Endothelial cell of umbilical vein (primary cell): ENCODE measurements at regions of chr5 and their contacts with region 1.

Region 1: GRCh38 chr5:62305715-62306322 is at the start of gene KIF2A:
- DNase-seq: peak; percentile 93
- H3K4me3 ChIP-seq: peak within 1 kb of the TSS; percentile 96 to 100 (median 98)
- H3K27ac ChIP-seq: peak within 1 kb of the TSS; percentile 67
- H3K4me1 ChIP-seq: peaks cover 19% of the 10 kb centered on the region
- H3K27me3 ChIP-seq: no peaks in the 10 kb centered on the region
- CTCF ChIP-seq: peak in 1 of 2 donors; percentile 11
- POLR2A ChIP-seq: peak; percentile 27
- total RNA-seq, gene KIF2A: 57.7 and 65.1 TPM in 2 replicates

Region 2: GRCh38 chr5:62256161-62257019 is 49.4 kb before region 1 on chr5:
- CTCF ChIA-PET with region 1: interaction called, 3 read pairs
- POLR2A ChIA-PET with region 1: no interaction called
- dilution Hi-C with region 1: no loop called
- intact Hi-C with region 1: loop called (anchors 5 kb)
- DNase-seq: peak; percentile 57
- H3K4me3 ChIP-seq: no peak overlapping the region
- H3K27ac ChIP-seq: peak overlapping the region; percentile 36
- H3K4me1 ChIP-seq: peaks cover 9% of the 10 kb centered on the region
- H3K27me3 ChIP-seq: peaks cover 2 to 3% of the 10 kb centered on the region in 2 experiments
- CTCF ChIP-seq: no peak
- POLR2A ChIP-seq: no peak

Region 3: GRCh38 chr5:62340392-62340791 is 34.6 kb after region 1 on chr5:
- CTCF ChIA-PET with region 1: no interaction called
- POLR2A ChIA-PET with region 1: no interaction called
- dilution Hi-C with region 1: no loop called
- intact Hi-C with region 1: loop called (anchors 5 kb)
- DNase-seq: peak; percentile 27
- H3K4me3 ChIP-seq: no peak overlapping the region
- H3K27ac ChIP-seq: no peak overlapping the region
- H3K4me1 ChIP-seq: peaks cover 9% of the 10 kb centered on the region
- H3K27me3 ChIP-seq: no peaks in the 10 kb centered on the region
- CTCF ChIP-seq: no peak
- POLR2A ChIP-seq: no peak

Region 4: GRCh38 chr5:62403434-62404250 is 97.8 kb after region 1 on chr5 and contains the start of gene DIMT1:
- CTCF ChIA-PET with region 1: interaction called, 4 read pairs
- POLR2A ChIA-PET with region 1: interaction called, 4 read pairs
- dilution Hi-C with region 1: no loop called
- intact Hi-C with region 1: loop called (anchors 2 kb)
- DNase-seq: peak; percentile 98
- H3K4me3 ChIP-seq: peak within 1 kb of the TSS; percentile 59 to 91 (median 88)
- H3K27ac ChIP-seq: peak within 1 kb of the TSS; percentile 90
- H3K4me1 ChIP-seq: peaks cover 13% of the 10 kb centered on the region
- H3K27me3 ChIP-seq: no peaks in the 10 kb centered on the region
- CTCF ChIP-seq: no peak
- POLR2A ChIP-seq: peak; percentile 98
- total RNA-seq, gene DIMT1: 29.7 and 34.4 TPM in 2 replicates